GM12878 (cell line): ENCODE measurements at regions of chr4 and their contacts with region 1.

Region 1: GRCh38 chr4:67550857-67551256 is 5.6 kb upstream of the CENPC start:
- DNase-seq: no peak
- ATAC-seq: peak; percentile 14; the same call in 1 of the 3 replicates
- H3K4me3 ChIP-seq: no peak overlapping the region
- H3K27ac ChIP-seq: peak overlapping the region; percentile 4; the same call in 1 of the 2 replicates
- H3K4me1 ChIP-seq: peaks cover 4% of the 10 kb centered on the region; the same call in 1 of the 2 replicates
- H3K27me3 ChIP-seq: no peaks in the 10 kb centered on the region
- CTCF ChIP-seq: no peak
- EP300 ChIP-seq: no peak
- POLR2A ChIP-seq: no peak
- RAD21 ChIP-seq: no peak

Region 2: DNA sequence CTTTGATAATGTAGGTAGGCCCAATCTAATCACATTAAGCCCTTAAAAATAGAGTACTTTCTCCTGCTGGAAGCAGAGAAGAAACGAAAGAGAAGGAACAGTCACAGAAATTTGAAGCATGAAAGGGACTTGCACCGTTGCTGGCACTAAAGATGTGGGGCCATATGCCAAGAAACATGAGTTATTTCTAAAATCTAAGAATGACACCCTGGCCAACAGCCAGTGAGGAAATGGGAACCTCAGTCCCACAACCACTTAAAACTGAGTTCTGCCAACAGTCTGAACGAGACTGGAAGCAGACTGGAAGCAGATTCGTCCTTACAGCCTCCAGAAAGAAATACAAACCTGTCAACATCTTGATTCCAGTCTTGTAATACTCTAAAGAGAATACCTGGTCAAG is 75.7 kb before region 1 on chr4:
- CTCF ChIA-PET with region 1: no interaction called
- POLR2A ChIA-PET with region 1: no interaction called
- RAD21 ChIA-PET with region 1: no interaction called
- SMC1A ChIA-PET with region 1: no interaction called
- in situ Hi-C with region 1: no loop called
- intact Hi-C with region 1: no loop called
- DNase-seq: no peak
- ATAC-seq: no peak
- H3K4me3 ChIP-seq: no peak overlapping the region
- H3K27ac ChIP-seq: no peak overlapping the region
- H3K4me1 ChIP-seq: no peaks in the 10 kb centered on the region
- H3K27me3 ChIP-seq: no peaks in the 10 kb centered on the region
- CTCF ChIP-seq: no peak
- EP300 ChIP-seq: no peak
- POLR2A ChIP-seq: no peak
- RAD21 ChIP-seq: no peak

Region 3: GRCh38 chr4:67512501-67512900 is 38.4 kb before region 1 on chr4:
- CTCF ChIA-PET with region 1: no interaction called
- POLR2A ChIA-PET with region 1: no interaction called
- RAD21 ChIA-PET with region 1: no interaction called
- SMC1A ChIA-PET with region 1: no interaction called
- in situ Hi-C with region 1: no loop called
- intact Hi-C with region 1: no loop called
- DNase-seq: no peak
- ATAC-seq: no peak
- H3K4me3 ChIP-seq: no peak overlapping the region
- H3K27ac ChIP-seq: no peak overlapping the region
- H3K4me1 ChIP-seq: no peaks in the 10 kb centered on the region
- H3K27me3 ChIP-seq: no peaks in the 10 kb centered on the region
- CTCF ChIP-seq: no peak
- EP300 ChIP-seq: no peak
- POLR2A ChIP-seq: no peak
- RAD21 ChIP-seq: no peak

Region 4: GRCh38 chr4:67575232-67575888 is 24.5 kb after region 1 on chr4:
- CTCF ChIA-PET with region 1: interaction called, 11 read pairs
- POLR2A ChIA-PET with region 1: interaction called, 5 read pairs
- RAD21 ChIA-PET with region 1: interaction called, 11 read pairs
- SMC1A ChIA-PET with region 1: interaction called, 22 read pairs
- in situ Hi-C with region 1: no loop called
- intact Hi-C with region 1: loop called (anchors 2 kb)
- DNase-seq: peak; percentile 85
- ATAC-seq: peak; percentile 91
- H3K4me3 ChIP-seq: peak overlapping the region; percentile 56
- H3K27ac ChIP-seq: peak overlapping the region; percentile 67
- H3K4me1 ChIP-seq: peaks cover 19% of the 10 kb centered on the region
- H3K27me3 ChIP-seq: no peaks in the 10 kb centered on the region
- CTCF ChIP-seq: no peak
- EP300 ChIP-seq: peak in 1 of 2 experiments; percentile 77; a peak in 2 of 4 replicates
- POLR2A ChIP-seq: no peak
- RAD21 ChIP-seq: no peak

Region 5: GRCh38 chr4:67581208-67581857 is 30.5 kb after region 1 on chr4:
- CTCF ChIA-PET with region 1: interaction called, 11 read pairs
- POLR2A ChIA-PET with region 1: interaction called, 5 read pairs
- RAD21 ChIA-PET with region 1: interaction called, 11 read pairs
- SMC1A ChIA-PET with region 1: interaction called, 22 read pairs
- in situ Hi-C with region 1: no loop called
- intact Hi-C with region 1: loop called (anchors 2 kb)
- DNase-seq: no peak
- ATAC-seq: peak; percentile 65
- H3K4me3 ChIP-seq: peak overlapping the region; percentile 40
- H3K27ac ChIP-seq: peak overlapping the region; percentile 8
- H3K4me1 ChIP-seq: peaks cover 18% of the 10 kb centered on the region
- H3K27me3 ChIP-seq: no peaks in the 10 kb centered on the region
- CTCF ChIP-seq: no peak
- EP300 ChIP-seq: no peak
- POLR2A ChIP-seq: no peak
- RAD21 ChIP-seq: no peak

Region 6: GRCh38 chr4:67632492-67632891 is 81.6 kb after region 1 on chr4:
- CTCF ChIA-PET with region 1: interaction called, 3 read pairs
- POLR2A ChIA-PET with region 1: interaction called, 4 read pairs
- RAD21 ChIA-PET with region 1: no interaction called
- SMC1A ChIA-PET with region 1: interaction called, 14 read pairs
- in situ Hi-C with region 1: no loop called
- intact Hi-C with region 1: loop called (anchors 5 kb)
- DNase-seq: no peak
- ATAC-seq: peak; percentile 40; the same call in 1 of the 3 replicates
- H3K4me3 ChIP-seq: no peak overlapping the region
- H3K27ac ChIP-seq: no peak overlapping the region
- H3K4me1 ChIP-seq: no peaks in the 10 kb centered on the region
- H3K27me3 ChIP-seq: no peaks in the 10 kb centered on the region
- CTCF ChIP-seq: no peak
- EP300 ChIP-seq: no peak
- POLR2A ChIP-seq: no peak
- RAD21 ChIP-seq: no peak